AG04450 (cell line): ENCODE measurements at regions of chr14 and their contacts with region 1.

Region 1: DNA sequence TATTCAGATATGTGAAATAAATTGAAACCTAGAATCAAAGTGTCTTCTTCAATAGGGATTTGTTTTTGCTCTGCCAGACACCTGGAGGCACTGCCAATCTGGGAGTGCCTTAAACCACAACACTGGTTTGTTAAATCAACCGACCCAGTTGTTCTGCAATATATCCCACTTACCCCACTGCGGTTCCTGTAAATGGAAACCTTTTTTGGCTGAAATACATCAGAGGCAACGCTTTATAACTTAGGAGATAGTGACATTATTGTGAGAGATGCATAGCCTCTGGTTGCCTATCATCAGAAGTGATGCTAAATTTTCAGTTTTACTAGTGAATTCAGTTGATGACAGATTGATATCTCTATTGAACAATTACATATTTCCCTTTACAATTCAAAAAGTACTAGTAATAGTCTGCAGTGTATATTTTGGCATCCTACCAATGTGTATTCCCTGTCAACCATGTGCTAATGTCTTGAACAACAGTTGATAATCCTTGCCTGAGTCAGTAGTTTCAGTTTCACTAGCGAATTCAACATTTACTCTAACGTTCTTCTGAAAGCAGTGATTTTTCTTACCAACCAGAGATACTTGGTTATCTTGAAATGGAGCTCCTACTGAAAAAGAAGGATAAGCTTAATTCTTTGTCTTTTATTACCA is 30.5 kb downstream of the PPP2R5C start:
- DNase-seq: peak; percentile 27
- H3K4me3 ChIP-seq: peak overlapping the region; percentile 33
- H3K27ac ChIP-seq: no peak overlapping the region
- H3K27me3 ChIP-seq: no peaks in the 10 kb centered on the region
- CTCF ChIP-seq: no peak

Region 2: GRCh38 chr14:101808020-101808641 is 16.1 kb after region 1 on chr14:
- CTCF ChIA-PET with region 1: no interaction called
- POLR2A ChIA-PET with region 1: no interaction called
- DNase-seq: no peak
- H3K4me3 ChIP-seq: no peak overlapping the region
- H3K27ac ChIP-seq: no peak overlapping the region
- H3K27me3 ChIP-seq: no peaks in the 10 kb centered on the region
- CTCF ChIP-seq: 0 out of 2 replicates have a peak, but pooled peaks have one; percentile 14

Region 3: DNA sequence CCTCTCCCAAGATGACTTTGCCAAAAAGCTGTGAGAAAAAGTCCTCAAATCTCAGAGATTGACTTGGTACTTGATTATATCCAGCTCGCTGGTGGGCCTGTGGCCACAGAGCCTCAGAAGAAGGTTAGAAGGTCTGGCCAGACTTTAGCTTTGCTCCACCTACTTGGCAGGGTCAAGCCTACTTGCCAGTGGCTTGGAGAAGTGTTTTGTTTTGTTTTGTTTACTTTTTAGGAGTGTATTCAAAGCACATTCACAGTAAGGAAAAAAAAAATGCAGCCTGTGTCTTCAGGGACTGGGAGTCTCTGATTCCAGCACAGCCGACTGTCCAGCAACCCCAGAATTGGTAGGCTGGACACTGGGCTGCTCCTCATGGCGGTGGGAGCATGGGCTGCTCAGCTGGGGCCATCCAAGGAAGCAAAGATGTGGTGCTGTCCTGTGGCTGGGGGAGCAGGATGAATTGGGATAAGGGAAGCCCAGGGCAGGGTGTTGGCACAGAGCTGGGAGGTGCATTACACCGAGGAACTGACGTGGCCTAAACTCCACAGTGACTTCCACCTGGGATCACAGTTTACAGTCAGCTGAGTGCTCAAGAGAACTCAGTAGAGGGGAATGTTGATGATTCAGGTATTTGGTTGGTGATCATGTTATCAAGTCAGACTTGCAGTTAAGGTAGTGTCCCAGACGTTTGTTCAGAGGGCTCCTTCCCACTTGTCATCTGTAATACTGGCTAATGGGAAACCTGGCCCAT is 42.9 kb after region 1 on chr14:
- CTCF ChIA-PET with region 1: no interaction called
- POLR2A ChIA-PET with region 1: interaction called, 10 read pairs
- DNase-seq: no peak
- H3K4me3 ChIP-seq: no peak overlapping the region
- H3K27ac ChIP-seq: no peak overlapping the region
- H3K27me3 ChIP-seq: no peaks in the 10 kb centered on the region
- CTCF ChIP-seq: no peak